A549 (cell line): ENCODE measurements at regions of chr14 and their contacts with region 1.

Region 1: GRCh38 chr14:105351920-105352851 is 37.6 kb downstream of the PACS2 start:
- DNase-seq: peak; percentile 90 to 93
- ATAC-seq: peak; percentile 91 to 95
- H3K4me3 ChIP-seq: no peak overlapping the region
- H3K27ac ChIP-seq: 0 out of 6 replicates have a peak overlapping the region, but pooled peaks of 1 of the 2 experiments have one; percentile 24
- H3K4me1 ChIP-seq: 0 out of 3 replicates have a peak, but pooled peaks cover 3% of the 10 kb centered on the region
- CTCF ChIP-seq: peak; percentile 78
- EP300 ChIP-seq: no peak
- POLR2A ChIP-seq: no peak
- RAD21 ChIP-seq: peak; percentile 85 to 95

Region 2: GRCh38 chr14:105203057-105203531 is 149.1 kb before region 1 on chr14:
- CTCF ChIA-PET with region 1: interaction called, 24 read pairs
- POLR2A ChIA-PET with region 1: no interaction called
- DNase-seq: peak; percentile 66 to 81
- ATAC-seq: peak; percentile 37 to 75
- H3K4me3 ChIP-seq: no peak overlapping the region
- H3K27ac ChIP-seq: peak overlapping the region in 1 of 2 experiments; percentile 58; a peak in 2 of 6 replicates
- H3K4me1 ChIP-seq: peaks cover 43% of the 10 kb centered on the region
- CTCF ChIP-seq: peak; percentile 89
- EP300 ChIP-seq: no peak
- POLR2A ChIP-seq: no peak
- RAD21 ChIP-seq: peak; percentile 63 to 76

Region 3: DNA sequence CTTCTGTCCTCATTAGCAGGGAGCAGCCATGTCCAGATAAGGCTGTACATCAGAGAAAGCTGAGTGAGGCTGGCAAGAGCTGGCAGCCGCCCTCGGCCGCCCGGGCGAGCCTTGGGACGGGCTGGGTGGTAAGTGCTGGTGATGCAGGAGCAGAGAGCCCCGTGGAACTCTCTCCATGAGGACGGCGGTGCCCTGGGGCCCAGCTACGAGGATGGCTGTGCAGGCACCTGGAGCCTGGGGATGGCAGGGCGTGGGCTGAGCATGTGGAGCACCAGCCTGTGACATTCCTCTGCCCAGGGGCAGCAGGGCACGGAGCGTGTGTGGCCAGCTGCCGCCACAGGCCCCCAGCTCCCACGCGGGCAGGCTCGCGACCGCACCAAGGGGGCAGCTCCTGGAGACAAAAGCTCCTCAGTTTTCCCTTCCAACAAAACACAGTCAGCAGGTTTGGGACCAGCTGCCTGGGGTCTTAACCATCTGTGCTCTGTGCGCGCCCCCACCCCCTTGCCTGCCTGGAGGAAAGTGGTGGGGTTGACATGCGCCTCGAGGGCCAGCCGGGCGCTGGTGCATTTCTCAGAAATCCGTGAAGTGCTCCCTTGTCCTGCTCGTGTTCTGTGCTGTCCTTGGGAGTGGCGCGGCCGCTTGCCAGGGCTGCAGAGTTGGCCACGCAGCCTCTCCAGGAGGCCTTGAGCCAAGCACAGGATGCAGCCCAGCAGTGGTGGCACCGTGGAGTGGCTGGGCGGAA is 16.3 kb before region 1 on chr14:
- CTCF ChIA-PET with region 1: interaction called, 14 read pairs
- POLR2A ChIA-PET with region 1: no interaction called
- DNase-seq: no peak
- ATAC-seq: no peak
- H3K4me3 ChIP-seq: no peak overlapping the region
- H3K27ac ChIP-seq: no peak overlapping the region
- H3K4me1 ChIP-seq: no peaks in the 10 kb centered on the region
- CTCF ChIP-seq: no peak
- EP300 ChIP-seq: no peak
- POLR2A ChIP-seq: no peak
- RAD21 ChIP-seq: no peak

Region 4: GRCh38 chr14:105340821-105341733 is 11.1 kb before region 1 on chr14:
- CTCF ChIA-PET with region 1: interaction called, 14 read pairs
- POLR2A ChIA-PET with region 1: no interaction called
- DNase-seq: no peak
- ATAC-seq: no peak
- H3K4me3 ChIP-seq: no peak overlapping the region
- H3K27ac ChIP-seq: no peak overlapping the region
- H3K4me1 ChIP-seq: no peaks in the 10 kb centered on the region
- CTCF ChIP-seq: no peak
- EP300 ChIP-seq: no peak
- POLR2A ChIP-seq: no peak
- RAD21 ChIP-seq: no peak

Region 5: DNA sequence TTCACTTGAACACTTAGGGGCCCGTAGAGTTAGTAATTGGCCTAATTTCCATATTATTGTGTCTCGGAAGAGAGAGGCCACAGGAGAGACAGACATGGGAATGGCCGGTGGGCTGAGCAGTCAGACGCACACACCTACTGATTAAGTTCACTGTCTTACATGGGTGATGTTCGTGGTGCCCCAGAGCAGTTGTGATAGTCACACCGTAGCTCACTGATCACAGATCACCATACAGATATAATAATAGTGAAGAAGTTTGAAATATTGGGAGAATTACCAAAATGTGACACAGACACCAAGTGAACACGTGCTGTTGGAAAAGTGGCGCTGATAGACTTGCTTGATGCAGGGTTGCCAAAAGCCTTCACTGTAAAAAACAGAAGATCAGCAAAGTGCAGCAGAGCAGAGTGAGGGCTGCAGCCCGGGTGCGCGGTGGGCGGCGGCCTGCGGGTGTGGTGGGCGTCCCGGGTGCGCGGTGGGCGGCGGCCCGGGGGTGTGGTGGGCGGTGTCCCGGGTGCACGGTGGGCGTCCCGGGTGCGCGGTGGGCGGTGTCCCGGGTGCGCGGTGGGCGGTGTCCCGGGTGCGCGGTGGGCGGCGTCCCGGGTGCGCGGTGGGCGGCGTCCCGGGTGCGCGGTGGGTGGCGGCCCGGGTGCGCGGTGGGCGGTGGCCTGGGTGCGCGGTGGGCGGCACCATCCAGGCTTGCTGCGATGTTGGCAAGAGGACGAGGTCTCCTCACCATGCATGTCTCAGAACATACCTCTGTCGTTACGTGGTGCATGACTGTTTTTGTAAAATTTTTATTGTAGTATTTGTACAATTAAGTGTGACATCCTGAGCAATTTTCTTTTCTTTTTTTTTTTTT is 11.9 kb after region 1 on chr14:
- CTCF ChIA-PET with region 1: interaction called, 14 read pairs
- POLR2A ChIA-PET with region 1: no interaction called
- DNase-seq: peak in 1 of 2 experiments; percentile 20
- ATAC-seq: peak; percentile 54 to 70; a peak in 5 of 6 replicates
- H3K4me3 ChIP-seq: no peak overlapping the region
- H3K27ac ChIP-seq: no peak overlapping the region
- H3K4me1 ChIP-seq: no peaks in the 10 kb centered on the region
- CTCF ChIP-seq: no peak
- EP300 ChIP-seq: no peak
- POLR2A ChIP-seq: no peak
- RAD21 ChIP-seq: no peak

Region 6: GRCh38 chr14:105426416-105427130 is 74.4 kb after region 1 on chr14:
- CTCF ChIA-PET with region 1: no interaction called
- POLR2A ChIA-PET with region 1: no interaction called
- DNase-seq: no peak
- ATAC-seq: no peak
- H3K4me3 ChIP-seq: no peak overlapping the region
- H3K27ac ChIP-seq: no peak overlapping the region
- H3K4me1 ChIP-seq: peaks cover 24% of the 10 kb centered on the region
- CTCF ChIP-seq: no peak
- EP300 ChIP-seq: no peak
- POLR2A ChIP-seq: no peak
- RAD21 ChIP-seq: no peak

Region 7: DNA sequence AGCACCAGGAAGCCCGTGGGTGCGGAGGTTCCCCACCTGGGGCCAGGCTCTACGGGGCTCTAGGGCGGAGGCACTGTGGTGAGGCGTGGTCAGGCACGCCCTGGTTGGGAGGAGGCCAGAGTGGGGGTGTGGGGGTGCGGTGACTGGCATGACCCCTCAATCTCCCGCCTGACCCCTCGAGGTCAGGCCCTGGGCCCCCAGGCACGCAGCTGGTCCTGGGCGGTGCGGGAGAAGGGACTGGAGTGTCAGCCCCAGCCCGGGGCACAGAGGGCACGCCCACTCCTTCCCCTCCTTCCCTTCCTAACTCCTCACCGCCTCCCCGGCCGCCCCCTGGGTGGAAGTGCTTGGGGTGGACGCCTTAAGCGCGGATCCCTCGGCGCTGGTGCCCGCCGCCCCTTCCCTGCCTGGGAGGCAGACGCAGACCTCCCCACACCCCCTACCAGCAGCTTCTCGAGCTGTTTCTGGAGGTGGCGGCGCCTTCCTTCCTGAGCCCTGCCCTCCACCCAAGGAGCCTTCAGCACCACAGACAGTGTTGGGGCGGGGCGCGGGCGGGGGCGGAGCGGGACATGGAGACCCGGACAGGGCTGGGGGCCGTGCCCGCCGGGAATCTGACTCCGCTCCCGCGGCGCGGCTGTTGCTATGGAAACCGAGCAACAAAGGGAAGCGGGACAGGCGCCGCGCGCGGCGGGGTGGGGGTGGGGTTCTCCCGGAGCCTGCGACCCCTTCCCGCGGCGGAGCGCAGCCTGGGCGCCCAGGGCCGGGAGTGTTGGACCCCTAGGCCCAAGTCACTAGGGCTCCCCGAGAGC is 121.7 kb after region 1 on chr14:
- CTCF ChIA-PET with region 1: no interaction called
- POLR2A ChIA-PET with region 1: no interaction called
- DNase-seq: peak; percentile 89 to 92
- ATAC-seq: peak; percentile 59 to 83
- H3K4me3 ChIP-seq: peak overlapping the region; percentile 82
- H3K27ac ChIP-seq: peak overlapping the region; percentile 84 to 97
- H3K4me1 ChIP-seq: peaks cover 58% of the 10 kb centered on the region
- CTCF ChIP-seq: no peak
- EP300 ChIP-seq: no peak; a peak in 1 of 5 replicates
- POLR2A ChIP-seq: no peak
- RAD21 ChIP-seq: no peak